ENCODE measurements at regions of chr13 and their contacts with region 1.

Region 1: GRCh38 chr13:53167561-53167960 is 138.9 kb downstream of the OLFM4 start:
- DNase-seq: no peak
- H3K4me3 ChIP-seq: no peak overlapping the region
- H3K27ac ChIP-seq: no peak overlapping the region
- H3K4me1 ChIP-seq: peaks cover 3% of the 10 kb centered on the region
- H3K27me3 ChIP-seq: no peaks in the 10 kb centered on the region
- CTCF ChIP-seq: no peak
- EP300 ChIP-seq: no peak
- POLR2A ChIP-seq: no peak

Region 2: GRCh38 chr13:53143757-53144339 is 23.7 kb before region 1 on chr13:
- intact Hi-C with region 1: loop called in 1 of 4 experiments (anchors 1 kb)
- DNase-seq: no peak
- H3K4me3 ChIP-seq: no peak overlapping the region
- H3K27ac ChIP-seq: no peak overlapping the region
- H3K4me1 ChIP-seq: no peaks in the 10 kb centered on the region
- H3K27me3 ChIP-seq: no peaks in the 10 kb centered on the region
- CTCF ChIP-seq: no peak
- EP300 ChIP-seq: no peak
- POLR2A ChIP-seq: no peak